ENCODE measurements at regions of chr7 and their contacts with region 1.

Region 1: GRCh38 chr7:49159536-49159935 is 235.2 kb downstream of the CDC14C start:
- DNase-seq: no peak
- ATAC-seq: no peak
- H3K4me3 Mint-ChIP-seq: no peak overlapping the region
- H3K27ac Mint-ChIP-seq: no peak overlapping the region
- H3K4me1 Mint-ChIP-seq: no peaks in the 10 kb centered on the region
- H3K27me3 Mint-ChIP-seq: no peaks in the 10 kb centered on the region

Region 2: GRCh38 chr7:49137978-49138377 is 21.6 kb before region 1 on chr7:
- CTCF ChIA-PET with region 1: no interaction called
- POLR2A ChIA-PET with region 1: no interaction called
- intact Hi-C with region 1: loop called in 1 of 2 experiments (anchors 2 kb)
- DNase-seq: no peak
- ATAC-seq: no peak
- H3K4me3 Mint-ChIP-seq: no peak overlapping the region
- H3K27ac Mint-ChIP-seq: no peak overlapping the region
- H3K4me1 Mint-ChIP-seq: no peaks in the 10 kb centered on the region
- H3K27me3 Mint-ChIP-seq: no peaks in the 10 kb centered on the region

Measured in activated CD4-positive, alpha-beta T cell treated with anti-CD3 and anti-CD28 coated beads for 36 hours (primary cell).